ENCODE measurements at regions of chr3 and their contacts with region 1.

Region 1: GRCh38 chr3:354432-354831 is 157.9 kb downstream of the CHL1 start:
- DNase-seq: peak; percentile 60
- ATAC-seq: peak; percentile 87
- H3K4me3 ChIP-seq: no peak overlapping the region
- H3K27ac ChIP-seq: no peak overlapping the region
- H3K4me1 ChIP-seq: no peaks in the 10 kb centered on the region
- H3K27me3 ChIP-seq: no peaks in the 10 kb centered on the region
- CTCF ChIP-seq: peak; percentile 72 to 84 (median 76)
- EP300 ChIP-seq: no peak
- POLR2A ChIP-seq: no peak
- RAD21 ChIP-seq: peak; percentile 94

Region 2: GRCh38 chr3:46576-46975 is 307.9 kb before region 1 on chr3:
- CTCF ChIA-PET with region 1: interaction called, 415 read pairs
- POLR2A ChIA-PET with region 1: interaction called, 4 read pairs
- RAD21 ChIA-PET with region 1: interaction called, 328 read pairs
- SMC1A ChIA-PET with region 1: interaction called, 331 read pairs
- in situ Hi-C with region 1: no loop called
- intact Hi-C with region 1: loop called (anchors 1 kb)
- DNase-seq: no peak
- ATAC-seq: no peak
- H3K4me3 ChIP-seq: no peak overlapping the region
- H3K27ac ChIP-seq: no peak overlapping the region
- H3K4me1 ChIP-seq: no peaks in the 10 kb centered on the region
- H3K27me3 ChIP-seq: no peaks in the 10 kb centered on the region
- CTCF ChIP-seq: no peak
- EP300 ChIP-seq: no peak
- POLR2A ChIP-seq: no peak
- RAD21 ChIP-seq: no peak

Region 3: DNA sequence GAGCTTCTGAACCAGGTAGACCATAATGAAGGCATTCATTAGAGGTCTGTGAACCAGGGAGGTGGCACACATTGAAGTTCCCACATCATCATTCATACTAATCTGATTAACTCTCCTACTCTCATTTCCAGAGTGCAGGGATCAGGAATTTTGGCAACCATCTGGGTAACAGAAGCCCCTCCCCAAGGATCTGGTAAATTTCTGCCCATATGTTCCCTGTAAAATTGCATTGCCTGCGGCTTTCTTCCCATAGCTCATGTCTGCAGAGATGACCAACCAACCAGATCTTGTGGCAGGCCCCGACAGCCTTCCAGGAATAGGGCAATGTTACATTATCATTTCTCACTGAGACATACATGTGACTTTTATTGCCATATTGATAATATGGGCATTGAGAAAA is 269.3 kb before region 1 on chr3:
- CTCF ChIA-PET with region 1: interaction called, 12 read pairs
- POLR2A ChIA-PET with region 1: no interaction called
- RAD21 ChIA-PET with region 1: interaction called, 4 read pairs
- SMC1A ChIA-PET with region 1: interaction called, 14 read pairs
- in situ Hi-C with region 1: no loop called
- intact Hi-C with region 1: no loop called
- DNase-seq: no peak
- ATAC-seq: no peak
- H3K4me3 ChIP-seq: no peak overlapping the region
- H3K27ac ChIP-seq: no peak overlapping the region
- H3K4me1 ChIP-seq: no peaks in the 10 kb centered on the region
- H3K27me3 ChIP-seq: no peaks in the 10 kb centered on the region
- CTCF ChIP-seq: no peak
- EP300 ChIP-seq: no peak
- POLR2A ChIP-seq: no peak
- RAD21 ChIP-seq: no peak

Region 4: GRCh38 chr3:173886-174285 is 180.5 kb before region 1 on chr3:
- CTCF ChIA-PET with region 1: interaction called, 11 read pairs
- POLR2A ChIA-PET with region 1: interaction called, 3 read pairs
- RAD21 ChIA-PET with region 1: interaction called, 16 read pairs
- SMC1A ChIA-PET with region 1: interaction called, 15 read pairs
- in situ Hi-C with region 1: no loop called
- intact Hi-C with region 1: no loop called
- DNase-seq: peak; percentile 8
- ATAC-seq: peak; percentile 93
- H3K4me3 ChIP-seq: no peak overlapping the region
- H3K27ac ChIP-seq: no peak overlapping the region
- H3K4me1 ChIP-seq: no peaks in the 10 kb centered on the region
- H3K27me3 ChIP-seq: no peaks in the 10 kb centered on the region
- CTCF ChIP-seq: no peak
- EP300 ChIP-seq: no peak
- POLR2A ChIP-seq: no peak
- RAD21 ChIP-seq: no peak

Region 5: DNA sequence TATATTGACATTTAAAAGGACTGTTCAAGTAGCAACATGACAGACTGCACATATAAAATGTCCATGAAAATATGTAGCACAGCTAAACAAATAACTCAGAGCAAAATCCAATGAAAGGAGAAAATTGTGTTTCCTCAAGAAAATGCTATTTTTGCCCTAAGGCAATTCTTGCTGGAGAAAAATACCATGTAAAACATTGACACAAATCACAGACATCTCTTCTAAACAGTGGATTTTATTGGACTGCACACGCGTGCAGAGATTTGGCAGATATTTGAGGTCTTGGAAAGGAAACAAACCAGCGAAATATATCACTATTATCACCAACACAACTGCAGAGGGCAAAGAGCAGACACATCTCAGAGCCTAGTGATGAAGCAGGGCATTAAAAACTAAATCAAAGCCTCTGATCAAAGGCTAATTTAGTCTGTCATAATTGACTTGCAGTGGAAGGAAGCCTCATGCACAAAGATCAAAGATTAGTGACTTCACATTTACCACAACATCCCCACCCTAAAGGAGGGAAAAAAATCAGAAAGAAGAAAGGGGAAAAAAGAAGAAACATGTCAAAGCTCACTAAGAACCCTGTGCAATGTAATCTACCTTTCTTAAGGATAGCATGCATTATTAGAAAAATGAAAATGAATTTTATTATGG is 105.4 kb before region 1 on chr3:
- CTCF ChIA-PET with region 1: interaction called, 11 read pairs
- POLR2A ChIA-PET with region 1: no interaction called
- RAD21 ChIA-PET with region 1: interaction called, 9 read pairs
- SMC1A ChIA-PET with region 1: interaction called, 30 read pairs
- in situ Hi-C with region 1: no loop called
- intact Hi-C with region 1: no loop called
- DNase-seq: no peak
- ATAC-seq: no peak; the same call in 2 of the 3 replicates
- H3K4me3 ChIP-seq: no peak overlapping the region
- H3K27ac ChIP-seq: no peak overlapping the region
- H3K4me1 ChIP-seq: no peaks in the 10 kb centered on the region
- H3K27me3 ChIP-seq: no peaks in the 10 kb centered on the region
- CTCF ChIP-seq: no peak
- EP300 ChIP-seq: no peak
- POLR2A ChIP-seq: no peak
- RAD21 ChIP-seq: no peak

Region 6: GRCh38 chr3:299590-300301 is 54.7 kb before region 1 on chr3:
- CTCF ChIA-PET with region 1: interaction called, 20 read pairs
- POLR2A ChIA-PET with region 1: no interaction called
- RAD21 ChIA-PET with region 1: interaction called, 42 read pairs
- SMC1A ChIA-PET with region 1: interaction called, 64 read pairs
- in situ Hi-C with region 1: no loop called
- intact Hi-C with region 1: no loop called
- DNase-seq: no peak
- ATAC-seq: peak; percentile 94
- H3K4me3 ChIP-seq: no peak overlapping the region
- H3K27ac ChIP-seq: no peak overlapping the region
- H3K4me1 ChIP-seq: no peaks in the 10 kb centered on the region
- H3K27me3 ChIP-seq: no peaks in the 10 kb centered on the region
- CTCF ChIP-seq: no peak
- EP300 ChIP-seq: peak in 1 of 2 experiments; percentile 18; a peak in 1 of 4 replicates
- POLR2A ChIP-seq: no peak
- RAD21 ChIP-seq: no peak

Region 7: GRCh38 chr3:377158-377561 is 22.7 kb after region 1 on chr3:
- CTCF ChIA-PET with region 1: interaction called, 85 read pairs
- POLR2A ChIA-PET with region 1: interaction called, 4 read pairs
- RAD21 ChIA-PET with region 1: interaction called, 44 read pairs
- SMC1A ChIA-PET with region 1: interaction called, 75 read pairs
- in situ Hi-C with region 1: no loop called
- intact Hi-C with region 1: loop called (anchors 1 kb)
- DNase-seq: no peak
- ATAC-seq: peak; percentile 88
- H3K4me3 ChIP-seq: no peak overlapping the region
- H3K27ac ChIP-seq: no peak overlapping the region
- H3K4me1 ChIP-seq: no peaks in the 10 kb centered on the region
- H3K27me3 ChIP-seq: no peaks in the 10 kb centered on the region
- CTCF ChIP-seq: peak; percentile 17 to 65 (median 33); a peak in 2 of 6 replicates
- EP300 ChIP-seq: no peak
- POLR2A ChIP-seq: no peak
- RAD21 ChIP-seq: peak; percentile 61